WTC11 (cell line): ENCODE measurements at regions of chr1 and their contacts with region 1.

Region 1: DNA sequence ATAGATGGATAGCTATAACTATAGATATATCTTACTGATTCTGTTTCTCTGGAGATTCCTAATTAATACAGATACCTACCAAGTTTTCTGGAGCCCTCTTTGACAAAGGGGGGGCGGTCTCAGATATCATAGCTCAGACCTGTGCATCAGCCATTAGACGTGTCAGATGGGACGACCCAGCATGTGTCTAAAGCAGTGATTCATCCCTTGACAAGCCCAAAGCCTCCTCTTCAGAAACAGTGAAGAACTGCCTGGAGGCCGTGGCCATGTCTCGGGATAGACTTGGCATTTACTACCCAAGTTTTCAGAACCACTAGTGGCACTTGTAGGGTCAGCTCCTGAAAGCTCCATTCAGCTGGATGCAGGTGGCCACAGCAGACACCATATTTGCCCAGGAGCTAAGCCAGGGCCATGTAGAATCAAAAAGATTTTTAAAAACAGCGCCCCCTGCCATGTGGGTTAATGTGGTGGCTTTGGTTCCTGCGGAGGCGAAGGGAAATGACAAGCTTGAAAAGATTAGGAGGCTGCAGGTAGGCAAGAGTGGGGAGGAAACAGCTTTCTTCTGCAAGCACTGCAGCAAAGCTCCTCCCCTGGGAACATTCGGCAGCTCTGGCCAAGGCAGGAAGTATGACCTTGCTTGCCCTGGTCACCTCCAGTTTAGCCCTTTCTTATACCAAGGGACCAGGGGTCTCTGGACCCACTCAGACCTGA is 82.2 kb downstream of the FBXO2 start:
- DNase-seq: peak; percentile 81
- ATAC-seq: peak; percentile 94
- H3K4me3 Mint-ChIP-seq: no peak overlapping the region
- H3K27ac Mint-ChIP-seq: no peak overlapping the region
- H3K4me1 Mint-ChIP-seq: peaks cover 9% of the 10 kb centered on the region
- H3K27me3 Mint-ChIP-seq: no peaks in the 10 kb centered on the region
- CTCF ChIP-seq: 0 out of 2 replicates have a peak, but pooled peaks have one; percentile 31

Region 2: GRCh38 chr1:11248155-11248554 is 323.9 kb before region 1 on chr1:
- CTCF ChIA-PET with region 1: no interaction called
- POLR2A ChIA-PET with region 1: no interaction called
- DNase-seq: no peak
- ATAC-seq: peak; percentile 65
- H3K4me3 Mint-ChIP-seq: no peak overlapping the region
- H3K27ac Mint-ChIP-seq: 0 out of 2 replicates have a peak overlapping the region, but pooled peaks have one; percentile 68
- H3K4me1 Mint-ChIP-seq: no peaks in the 10 kb centered on the region
- H3K27me3 Mint-ChIP-seq: no peaks in the 10 kb centered on the region
- CTCF ChIP-seq: no peak

Region 3: GRCh38 chr1:11478571-11479374 is 93.3 kb before region 1 on chr1 and contains the start of gene DISP3:
- CTCF ChIA-PET with region 1: interaction called, 27 read pairs
- POLR2A ChIA-PET with region 1: no interaction called
- DNase-seq: peak; percentile 90
- ATAC-seq: peak; percentile 83
- H3K4me3 Mint-ChIP-seq: peak within 1 kb of the TSS; percentile 71
- H3K27ac Mint-ChIP-seq: no peak within 1 kb of the TSS
- H3K4me1 Mint-ChIP-seq: peaks cover 10% of the 10 kb centered on the region
- H3K27me3 Mint-ChIP-seq: peaks cover 40% of the 10 kb centered on the region
- CTCF ChIP-seq: peak; percentile 92
- total RNA-seq, gene DISP3: 5.9 to 6.1 TPM (median 6.0 TPM) in 3 replicates

Region 4: DNA sequence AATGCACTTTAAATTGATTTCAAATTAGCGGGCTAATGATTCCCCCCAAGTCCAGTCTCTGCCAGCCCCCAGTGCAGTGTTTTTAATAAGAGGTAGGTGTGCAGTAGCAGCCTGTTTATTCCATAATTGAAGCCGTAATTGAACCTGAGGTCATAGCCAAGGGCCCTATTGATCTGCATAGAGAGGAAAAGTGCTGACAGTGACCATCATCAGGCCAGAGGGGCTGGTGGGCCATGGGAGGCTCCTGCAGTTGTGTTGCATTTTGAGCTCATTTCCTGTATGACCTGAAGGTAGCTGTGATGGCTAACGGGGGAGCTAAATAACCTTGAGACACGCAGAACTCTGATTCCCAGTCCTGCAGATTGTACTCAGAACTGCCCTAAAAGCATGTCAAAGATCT is 25.6 kb before region 1 on chr1:
- CTCF ChIA-PET with region 1: interaction called, 10 read pairs
- POLR2A ChIA-PET with region 1: no interaction called
- DNase-seq: no peak
- ATAC-seq: no peak
- H3K4me3 Mint-ChIP-seq: no peak overlapping the region
- H3K27ac Mint-ChIP-seq: no peak overlapping the region
- H3K4me1 Mint-ChIP-seq: peaks cover 5% of the 10 kb centered on the region
- H3K27me3 Mint-ChIP-seq: peaks cover 11% of the 10 kb centered on the region
- CTCF ChIP-seq: no peak

Region 5: GRCh38 chr1:11602424-11602823 is 30.4 kb after region 1 on chr1:
- CTCF ChIA-PET with region 1: interaction called, 10 read pairs
- POLR2A ChIA-PET with region 1: no interaction called
- DNase-seq: no peak
- ATAC-seq: peak; percentile 39; the same call in 1 of the 2 replicates
- H3K4me3 Mint-ChIP-seq: no peak overlapping the region
- H3K27ac Mint-ChIP-seq: peak overlapping the region; percentile 47; the same call in 1 of the 2 replicates
- H3K4me1 Mint-ChIP-seq: peaks cover 10% of the 10 kb centered on the region
- H3K27me3 Mint-ChIP-seq: no peaks in the 10 kb centered on the region; the same call in 1 of the 2 replicates
- CTCF ChIP-seq: no peak

Region 6: GRCh38 chr1:11617310-11617709 is 45.2 kb after region 1 on chr1:
- CTCF ChIA-PET with region 1: interaction called, 23 read pairs
- POLR2A ChIA-PET with region 1: no interaction called
- DNase-seq: no peak
- ATAC-seq: no peak; the same call in 1 of the 2 replicates
- H3K4me3 Mint-ChIP-seq: no peak overlapping the region
- H3K27ac Mint-ChIP-seq: no peak overlapping the region; the same call in 1 of the 2 replicates
- H3K4me1 Mint-ChIP-seq: peaks cover 4% of the 10 kb centered on the region; the same call in 1 of the 2 replicates
- H3K27me3 Mint-ChIP-seq: no peaks in the 10 kb centered on the region; the same call in 1 of the 2 replicates
- CTCF ChIP-seq: no peak